CD4-positive, alpha-beta memory T cell (primary cell): ENCODE measurements at regions of chr2 and their contacts with region 1.

Region 1: DNA sequence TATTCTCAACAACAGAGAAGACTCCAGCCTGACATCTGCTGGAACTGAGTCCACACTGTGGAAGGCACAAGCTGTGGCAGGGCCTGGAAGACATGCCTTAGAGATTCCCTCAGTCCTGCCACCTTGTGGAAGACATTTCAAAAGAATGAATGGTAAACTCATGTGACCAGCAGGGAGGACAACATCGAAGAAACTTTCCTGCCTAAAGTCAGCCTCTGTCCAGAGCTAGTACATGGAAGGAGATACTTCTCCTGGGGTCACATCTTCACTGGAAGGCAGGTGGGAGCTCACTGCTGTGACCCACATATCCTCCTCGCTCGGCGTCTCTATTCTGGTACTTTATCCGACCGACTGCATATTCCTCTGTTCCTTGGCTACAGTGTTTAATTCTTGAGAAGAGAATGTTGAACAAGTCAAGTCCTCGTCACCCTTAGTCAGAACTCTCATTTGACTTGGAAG is 59.5 kb downstream of the PUM2 start:
- DNase-seq: peak in 3 of 5 donors; percentile 2 to 17 (median 9)
- H3K4me3 ChIP-seq: no peak overlapping the region
- H3K4me3 Mint-ChIP-seq: no peak overlapping the region
- H3K27ac ChIP-seq: no peak overlapping the region
- H3K27ac Mint-ChIP-seq: peak overlapping the region in 2 of 7 donors; percentile 56 to 63
- H3K4me1 ChIP-seq: no peaks in the 10 kb centered on the region
- H3K4me1 Mint-ChIP-seq: peaks cover 5 to 11% (median 9%) of the 10 kb centered on the region in 4 donors
- H3K27me3 ChIP-seq: no peaks in the 10 kb centered on the region
- H3K27me3 Mint-ChIP-seq: no peaks in the 10 kb centered on the region

Region 2: DNA sequence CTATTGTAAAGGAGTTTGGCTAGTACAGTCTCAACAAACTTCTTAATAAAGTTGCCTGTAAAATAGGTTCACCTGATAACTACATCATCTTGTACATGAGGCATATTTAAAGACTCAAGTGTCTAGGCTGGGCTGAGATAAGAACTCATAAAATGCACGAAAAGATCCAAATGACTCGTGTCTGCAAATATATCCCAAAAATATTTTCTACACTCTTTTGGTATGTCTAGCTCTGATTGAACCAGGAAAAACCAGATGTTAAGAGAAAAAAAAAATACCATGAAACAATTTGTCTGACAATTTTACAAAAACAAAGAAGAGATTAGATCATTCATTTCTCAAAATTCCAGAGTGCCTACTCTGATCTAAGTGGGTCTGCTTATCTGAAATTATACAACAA is 765.8 kb before region 1 on chr2:
- CTCF ChIA-PET with region 1: no interaction called
- POLR2A ChIA-PET with region 1: no interaction called
- intact Hi-C with region 1: no loop called
- DNase-seq: no peak
- H3K4me3 ChIP-seq: no peak overlapping the region
- H3K4me3 Mint-ChIP-seq: no peak overlapping the region
- H3K27ac ChIP-seq: no peak overlapping the region
- H3K27ac Mint-ChIP-seq: no peak overlapping the region
- H3K4me1 ChIP-seq: no peaks in the 10 kb centered on the region
- H3K4me1 Mint-ChIP-seq: no peaks in the 10 kb centered on the region
- H3K27me3 ChIP-seq: no peaks in the 10 kb centered on the region
- H3K27me3 Mint-ChIP-seq: peaks cover 11 to 13% of the 10 kb centered on the region in 2 donors

Region 3: GRCh38 chr2:20130821-20131645 is 160.1 kb before region 1 on chr2:
- CTCF ChIA-PET with region 1: no interaction called
- POLR2A ChIA-PET with region 1: no interaction called
- intact Hi-C with region 1: no loop called
- DNase-seq: no peak
- H3K4me3 ChIP-seq: no peak overlapping the region
- H3K4me3 Mint-ChIP-seq: no peak overlapping the region
- H3K27ac ChIP-seq: no peak overlapping the region
- H3K27ac Mint-ChIP-seq: no peak overlapping the region
- H3K4me1 ChIP-seq: no peaks in the 10 kb centered on the region
- H3K4me1 Mint-ChIP-seq: peaks cover 0 to 1% (median 0%) of the 10 kb centered on the region in 4 donors
- H3K27me3 ChIP-seq: no peaks in the 10 kb centered on the region
- H3K27me3 Mint-ChIP-seq: peaks cover 11 to 20% of the 10 kb centered on the region in 2 donors

Region 4: GRCh38 chr2:20212459-20212870 is 78.7 kb before region 1 on chr2:
- CTCF ChIA-PET with region 1: no interaction called
- POLR2A ChIA-PET with region 1: no interaction called
- intact Hi-C with region 1: no loop called
- DNase-seq: no peak
- H3K4me3 ChIP-seq: no peak overlapping the region
- H3K4me3 Mint-ChIP-seq: no peak overlapping the region
- H3K27ac ChIP-seq: no peak overlapping the region
- H3K27ac Mint-ChIP-seq: no peak overlapping the region
- H3K4me1 ChIP-seq: no peaks in the 10 kb centered on the region
- H3K4me1 Mint-ChIP-seq: no peaks in the 10 kb centered on the region
- H3K27me3 ChIP-seq: no peaks in the 10 kb centered on the region
- H3K27me3 Mint-ChIP-seq: peaks cover 0 to 7% of the 10 kb centered on the region in 2 donors

Region 5: DNA sequence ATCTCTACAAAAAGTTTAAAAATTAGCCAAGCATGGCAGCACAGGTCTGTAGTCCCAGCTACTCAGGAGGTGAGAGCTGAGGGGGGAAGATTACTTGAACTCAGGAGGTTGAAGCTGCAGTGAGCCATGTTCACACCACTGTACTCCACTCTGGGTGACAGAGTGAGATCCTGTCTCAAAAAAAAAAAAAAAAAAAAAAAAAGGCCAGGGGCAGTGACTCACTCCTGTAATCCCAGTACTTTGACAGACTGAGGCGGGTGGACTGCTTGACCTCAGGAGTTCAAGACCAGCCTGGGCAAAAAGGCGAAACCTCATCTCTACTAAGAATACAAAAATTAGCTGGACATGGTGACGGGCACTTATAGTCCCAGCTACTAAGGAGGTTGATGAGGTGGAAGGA is 22.5 kb after region 1 on chr2:
- CTCF ChIA-PET with region 1: interaction called, 7 read pairs
- POLR2A ChIA-PET with region 1: no interaction called
- intact Hi-C with region 1: loop called (anchors 2 kb)
- DNase-seq: no peak
- H3K4me3 ChIP-seq: no peak overlapping the region
- H3K4me3 Mint-ChIP-seq: no peak overlapping the region
- H3K27ac ChIP-seq: no peak overlapping the region
- H3K27ac Mint-ChIP-seq: no peak overlapping the region
- H3K4me1 ChIP-seq: peaks cover 20% of the 10 kb centered on the region
- H3K4me1 Mint-ChIP-seq: peaks cover 16 to 47% (median 30%) of the 10 kb centered on the region in 4 donors
- H3K27me3 ChIP-seq: no peaks in the 10 kb centered on the region
- H3K27me3 Mint-ChIP-seq: no peaks in the 10 kb centered on the region